ENCODE measurements at regions of chr11 and their contacts with region 1.

Region 1: DNA sequence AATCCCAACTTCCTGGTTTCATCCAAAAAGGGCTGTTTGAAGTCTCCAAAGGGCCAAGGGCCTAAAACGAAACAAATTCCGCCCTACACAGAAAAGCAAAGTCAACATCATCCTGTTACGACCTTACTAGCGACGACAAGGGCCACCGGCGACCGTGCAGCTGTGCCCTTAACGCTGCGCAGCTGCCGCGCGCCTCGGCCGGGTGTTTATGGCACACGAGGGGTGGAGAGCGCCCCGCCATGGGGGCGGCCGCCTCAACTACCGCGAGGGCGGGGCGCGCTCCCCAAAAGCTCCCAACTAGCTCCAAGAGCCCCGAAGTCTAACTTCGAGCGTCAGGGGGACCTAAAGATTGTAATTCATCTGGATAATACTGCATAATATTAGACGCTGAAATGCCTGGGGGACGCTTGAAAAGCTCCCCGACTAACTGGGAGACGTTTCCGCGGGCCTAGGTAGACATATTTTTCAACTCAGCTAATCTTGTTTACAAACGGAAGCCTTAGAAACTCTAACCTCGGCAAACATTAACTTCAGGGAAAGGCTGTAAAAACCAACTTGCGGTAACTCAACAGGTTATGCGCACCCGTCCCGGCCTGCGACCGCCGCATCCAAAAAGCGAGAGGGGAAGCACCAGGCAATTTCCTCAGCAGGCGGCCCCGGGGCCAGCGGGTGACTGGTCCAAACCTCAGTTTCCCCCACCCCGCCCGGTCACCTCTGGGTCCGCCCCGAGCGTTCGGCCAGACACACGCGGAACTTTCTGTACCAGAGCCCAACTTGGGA is 694 bp downstream of the TMEM123 start:
- DNase-seq: peak; percentile 67 to 91 (median 78)
- ATAC-seq: peak; percentile 61
- H3K4me3 ChIP-seq: peak overlapping the region; percentile 93
- H3K4me3 Mint-ChIP-seq: peak overlapping the region; percentile 99
- H3K27ac ChIP-seq: peak overlapping the region; percentile 65 to 90
- H3K27ac Mint-ChIP-seq: peak overlapping the region; percentile 96
- H3K4me1 ChIP-seq: peaks cover 53% of the 10 kb centered on the region
- H3K4me1 Mint-ChIP-seq: peaks cover 84% of the 10 kb centered on the region
- H3K27me3 ChIP-seq: no peaks in the 10 kb centered on the region
- H3K27me3 Mint-ChIP-seq: no peaks in the 10 kb centered on the region
- CTCF ChIP-seq: no peak

Region 2: DNA sequence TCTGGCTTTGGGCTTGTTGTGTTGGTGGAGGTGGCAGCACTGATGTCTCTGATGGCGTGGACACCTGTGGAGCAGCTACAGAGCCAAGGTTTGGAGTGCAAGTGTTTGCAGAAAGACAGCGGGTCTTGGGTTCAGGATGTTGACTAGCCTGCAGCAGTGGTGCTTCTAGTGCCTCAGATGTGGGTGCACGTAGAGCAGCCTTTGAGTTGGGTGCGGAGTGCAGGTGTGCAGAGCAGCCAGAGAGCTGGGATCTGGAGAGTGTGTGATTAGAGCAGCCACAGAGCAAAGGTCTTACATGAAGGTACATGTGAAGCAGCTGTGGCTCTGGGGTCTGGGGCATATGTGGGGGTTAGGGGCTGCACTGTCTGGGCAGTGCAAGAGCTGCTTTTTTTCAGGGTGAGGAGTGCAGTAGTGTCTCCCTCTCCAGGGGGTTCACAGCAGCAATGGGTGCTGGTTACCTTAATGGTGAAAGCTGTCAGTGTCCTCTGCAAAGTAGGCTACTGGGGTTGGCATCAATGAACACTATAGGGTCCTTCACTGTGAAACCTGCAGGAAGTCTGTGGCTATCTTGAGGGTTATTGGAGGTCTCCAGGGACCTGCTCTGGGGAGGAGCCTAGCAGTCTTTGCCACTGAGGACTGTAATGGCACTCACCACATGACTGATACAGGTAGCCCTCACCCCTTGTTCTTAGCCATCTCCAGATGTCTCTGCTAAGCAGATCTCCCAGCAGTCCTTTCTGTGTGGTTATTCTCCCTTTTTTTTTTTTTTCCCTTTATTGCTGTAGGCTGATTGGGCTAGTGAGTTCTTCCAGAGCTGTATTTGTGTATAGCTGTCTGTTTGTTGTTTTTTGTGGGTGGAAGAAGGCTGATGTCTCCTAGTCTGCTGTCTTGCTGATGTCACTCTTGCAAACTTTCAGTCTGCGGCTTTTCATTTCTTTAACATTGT is 90.5 kb before region 1 on chr11:
- CTCF ChIA-PET with region 1: interaction called, 6 read pairs
- POLR2A ChIA-PET with region 1: interaction called, 12 read pairs
- intact Hi-C with region 1: loop called in 1 of 2 experiments (anchors 5 kb)
- DNase-seq: peak; percentile 35 to 85 (median 60)
- ATAC-seq: peak; percentile 74
- H3K4me3 ChIP-seq: peak overlapping the region; percentile 24
- H3K4me3 Mint-ChIP-seq: peak overlapping the region; percentile 44
- H3K27ac ChIP-seq: peak overlapping the region; percentile 46 to 76
- H3K27ac Mint-ChIP-seq: peak overlapping the region; percentile 95
- H3K4me1 ChIP-seq: peaks cover 17% of the 10 kb centered on the region
- H3K4me1 Mint-ChIP-seq: peaks cover 49% of the 10 kb centered on the region
- H3K27me3 ChIP-seq: no peaks in the 10 kb centered on the region
- H3K27me3 Mint-ChIP-seq: no peaks in the 10 kb centered on the region
- CTCF ChIP-seq: no peak

Region 3: DNA sequence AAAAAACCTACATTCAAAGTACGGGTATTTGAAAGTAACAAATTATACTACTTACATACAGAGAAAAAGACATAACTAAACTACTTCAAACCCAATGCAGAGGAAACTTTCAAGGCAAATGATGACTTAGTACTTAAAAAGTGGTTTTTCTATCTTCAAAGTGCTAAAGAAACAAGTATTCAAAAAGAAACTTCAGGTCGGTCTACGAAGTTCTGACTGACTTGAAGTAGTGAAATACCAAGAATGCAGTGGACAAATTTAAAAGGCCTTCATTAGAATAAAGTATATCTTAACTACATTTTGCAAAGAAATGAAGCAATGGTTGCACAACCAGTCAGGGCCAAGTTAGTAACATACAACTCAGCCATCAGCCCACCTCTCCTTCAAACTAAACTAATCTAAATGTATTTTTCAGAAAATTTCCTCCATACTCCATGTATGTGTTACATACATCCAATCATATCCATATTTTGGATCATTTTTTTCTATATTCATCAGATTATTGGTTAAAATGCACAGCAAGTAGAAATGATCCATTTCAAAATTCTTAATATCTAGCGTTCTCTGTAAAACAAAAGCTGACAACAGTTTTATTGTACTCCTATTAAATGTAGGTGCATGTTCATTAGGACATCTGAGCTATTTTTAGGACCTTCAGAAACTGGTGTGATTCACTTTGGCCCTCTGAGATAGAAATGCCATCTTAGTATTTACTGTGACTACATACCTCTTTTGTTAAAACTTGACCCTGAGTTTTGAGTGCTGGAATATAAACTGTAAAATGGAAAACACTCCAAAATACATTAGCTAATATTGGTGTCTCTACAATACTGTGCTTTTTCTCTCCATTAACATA is 54.9 kb before region 1 on chr11:
- CTCF ChIA-PET with region 1: interaction called, 16 read pairs
- POLR2A ChIA-PET with region 1: interaction called, 39 read pairs
- intact Hi-C with region 1: loop called in 1 of 2 experiments (anchors 2 kb)
- DNase-seq: no peak
- ATAC-seq: no peak
- H3K4me3 ChIP-seq: no peak overlapping the region
- H3K4me3 Mint-ChIP-seq: peak overlapping the region; percentile 23
- H3K27ac ChIP-seq: peak overlapping the region in 1 of 2 donors; percentile 4
- H3K27ac Mint-ChIP-seq: peak overlapping the region; percentile 81
- H3K4me1 ChIP-seq: peaks cover 9% of the 10 kb centered on the region
- H3K4me1 Mint-ChIP-seq: peaks cover 64% of the 10 kb centered on the region
- H3K27me3 ChIP-seq: no peaks in the 10 kb centered on the region
- H3K27me3 Mint-ChIP-seq: no peaks in the 10 kb centered on the region
- CTCF ChIP-seq: no peak

Region 4: DNA sequence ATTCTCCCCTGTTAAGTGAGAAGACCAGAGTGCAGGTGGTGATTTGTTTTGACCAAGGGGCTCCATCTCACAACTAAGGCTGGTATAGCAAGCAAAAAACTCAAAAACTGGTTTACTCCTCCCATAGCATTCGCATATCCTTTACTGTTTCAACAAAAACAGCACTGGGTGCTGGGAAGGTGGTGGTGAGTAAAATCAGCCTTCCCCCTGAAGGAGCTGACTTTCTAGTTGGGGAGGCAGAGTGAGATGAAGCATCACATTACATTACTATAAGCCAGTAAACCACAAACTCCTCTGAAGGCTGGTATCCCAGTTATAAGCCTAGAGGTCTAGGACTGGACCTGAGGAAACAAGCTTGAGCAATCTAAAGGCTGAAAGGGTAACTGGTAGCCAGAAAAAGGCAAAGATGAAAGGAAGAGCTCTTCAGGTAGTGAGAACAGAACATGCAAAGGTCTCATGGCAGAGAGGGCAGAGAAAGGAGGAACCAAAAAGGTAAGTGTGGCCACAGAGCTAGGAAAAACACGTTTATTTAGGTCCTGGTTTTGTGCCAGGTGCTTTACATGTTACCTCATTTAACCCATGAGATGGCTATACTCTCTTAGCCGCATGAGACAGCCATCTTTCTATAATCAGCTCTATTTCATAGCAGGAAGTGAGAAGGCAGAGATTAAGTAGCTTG is 21.6 kb before region 1 on chr11:
- CTCF ChIA-PET with region 1: interaction called, 4 read pairs
- POLR2A ChIA-PET with region 1: interaction called, 9 read pairs
- intact Hi-C with region 1: loop called in 1 of 2 experiments (anchors 2 kb)
- DNase-seq: peak in 2 of 14 experiments; percentile 51 to 56
- ATAC-seq: peak; percentile 58
- H3K4me3 ChIP-seq: no peak overlapping the region
- H3K4me3 Mint-ChIP-seq: peak overlapping the region; percentile 11
- H3K27ac ChIP-seq: peak overlapping the region; percentile 48 to 53
- H3K27ac Mint-ChIP-seq: peak overlapping the region; percentile 76
- H3K4me1 ChIP-seq: peaks cover 40% of the 10 kb centered on the region
- H3K4me1 Mint-ChIP-seq: peaks cover 76% of the 10 kb centered on the region
- H3K27me3 ChIP-seq: no peaks in the 10 kb centered on the region
- H3K27me3 Mint-ChIP-seq: no peaks in the 10 kb centered on the region
- CTCF ChIP-seq: no peak

Region 5: DNA sequence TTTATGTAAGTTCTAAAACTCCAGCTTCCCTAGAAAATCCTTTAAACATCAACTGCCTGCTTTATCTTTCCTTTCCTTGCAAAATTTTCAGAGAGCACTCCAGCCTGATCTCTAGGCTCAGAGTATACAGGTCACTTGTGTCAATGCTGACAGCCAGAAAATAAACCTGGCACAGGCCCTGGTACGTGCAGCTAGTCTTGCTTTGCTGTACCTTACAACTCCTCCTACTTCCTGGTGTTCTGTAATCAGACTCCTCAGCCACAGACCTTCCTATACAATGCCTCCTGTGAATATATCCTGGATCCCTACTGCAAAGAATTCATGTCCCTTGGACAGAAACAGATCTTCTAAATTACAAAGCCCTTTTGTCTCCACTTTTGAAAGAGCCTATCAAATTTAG is 24.9 kb after region 1 on chr11:
- CTCF ChIA-PET with region 1: interaction called, 8 read pairs
- POLR2A ChIA-PET with region 1: interaction called, 11 read pairs
- intact Hi-C with region 1: loop called in 1 of 2 experiments (anchors 1 kb)
- DNase-seq: peak in 10 of 14 experiments; percentile 12 to 61 (median 26)
- ATAC-seq: peak; percentile 90
- H3K4me3 ChIP-seq: no peak overlapping the region
- H3K4me3 Mint-ChIP-seq: peak overlapping the region; percentile 69
- H3K27ac ChIP-seq: no peak overlapping the region
- H3K27ac Mint-ChIP-seq: peak overlapping the region; percentile 77
- H3K4me1 ChIP-seq: peaks cover 38% of the 10 kb centered on the region
- H3K4me1 Mint-ChIP-seq: peaks cover 68% of the 10 kb centered on the region
- H3K27me3 ChIP-seq: no peaks in the 10 kb centered on the region
- H3K27me3 Mint-ChIP-seq: no peaks in the 10 kb centered on the region
- CTCF ChIP-seq: no peak